Activated CD8-positive, alpha-beta memory T cell treated with anti-CD3 and anti-CD28 coated beads, Interleukin-2, amount 10 ng/mL, durations not matched to agents 7 days and 5 days (primary cell): ENCODE measurements at regions of chr9 and their contacts with region 1.

Region 1: DNA sequence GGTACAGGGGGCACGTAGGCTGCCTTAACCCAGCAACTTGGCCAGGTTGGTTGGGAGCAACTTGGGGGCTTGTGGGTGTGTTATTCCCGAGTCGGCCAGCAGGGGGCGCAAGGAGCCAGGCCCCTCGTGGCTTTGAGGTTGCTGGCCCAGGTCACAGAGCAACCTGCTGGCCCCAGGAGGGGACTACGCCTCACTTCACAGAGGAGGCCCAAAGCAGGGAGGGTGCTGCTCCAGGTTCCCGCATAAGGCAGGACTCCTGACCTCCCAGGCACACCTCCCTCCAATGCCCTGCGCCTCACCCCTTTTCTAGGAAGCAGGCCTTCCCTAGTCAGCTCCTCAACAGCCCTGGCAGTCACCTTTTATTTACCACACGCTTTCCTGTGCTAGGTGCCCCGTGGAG is 18.1 kb downstream of the KYAT1 start:
- DNase-seq: peak; percentile 89
- ATAC-seq: peak; percentile 93
- H3K4me3 Mint-ChIP-seq: no peak overlapping the region
- H3K27ac Mint-ChIP-seq: no peak overlapping the region
- H3K4me1 Mint-ChIP-seq: peaks cover 6% of the 10 kb centered on the region
- H3K27me3 Mint-ChIP-seq: no peaks in the 10 kb centered on the region

Region 2: DNA sequence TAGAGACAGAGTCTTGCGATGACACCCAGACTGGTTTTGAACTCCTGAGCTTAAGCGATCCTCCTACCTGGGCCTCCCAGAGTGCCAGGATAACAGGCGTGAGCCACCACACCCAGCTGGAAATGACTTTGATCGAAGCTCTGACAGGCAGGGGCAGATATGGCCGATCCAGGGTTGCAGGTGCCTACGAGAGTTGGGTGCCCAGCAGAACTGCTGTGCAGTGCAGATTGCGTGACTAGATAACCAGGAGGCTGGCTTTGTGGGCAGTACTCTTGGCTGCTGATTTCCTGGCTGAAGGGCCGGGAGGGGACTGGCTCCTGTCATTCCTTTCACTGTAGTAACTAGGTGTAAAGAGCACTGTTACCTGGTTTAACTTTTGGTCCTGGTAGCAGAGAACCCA is 64.8 kb before region 1 on chr9:
- CTCF ChIA-PET with region 1: no interaction called
- DNase-seq: no peak
- ATAC-seq: no peak
- H3K4me3 Mint-ChIP-seq: no peak overlapping the region
- H3K27ac Mint-ChIP-seq: no peak overlapping the region
- H3K4me1 Mint-ChIP-seq: peaks cover 1% of the 10 kb centered on the region
- H3K27me3 Mint-ChIP-seq: no peaks in the 10 kb centered on the region

Region 3: GRCh38 chr9:128881901-128882681 is 18.4 kb after region 1 on chr9 and contains the starts of genes KYAT1 and LRRC8A:
- CTCF ChIA-PET with region 1: interaction called, 17 read pairs
- DNase-seq: peak; percentile 99
- ATAC-seq: peak; percentile 96
- H3K4me3 Mint-ChIP-seq: peak within 1 kb of the TSS; percentile 90
- H3K27ac Mint-ChIP-seq: peak within 1 kb of the TSS; percentile 89
- H3K4me1 Mint-ChIP-seq: peaks cover 48% of the 10 kb centered on the region
- H3K27me3 Mint-ChIP-seq: no peaks in the 10 kb centered on the region
- total RNA-seq, gene KYAT1: 12.7 to 20.6 TPM
- total RNA-seq, gene LRRC8A: 25.6 to 26.7 TPM

Region 4: DNA sequence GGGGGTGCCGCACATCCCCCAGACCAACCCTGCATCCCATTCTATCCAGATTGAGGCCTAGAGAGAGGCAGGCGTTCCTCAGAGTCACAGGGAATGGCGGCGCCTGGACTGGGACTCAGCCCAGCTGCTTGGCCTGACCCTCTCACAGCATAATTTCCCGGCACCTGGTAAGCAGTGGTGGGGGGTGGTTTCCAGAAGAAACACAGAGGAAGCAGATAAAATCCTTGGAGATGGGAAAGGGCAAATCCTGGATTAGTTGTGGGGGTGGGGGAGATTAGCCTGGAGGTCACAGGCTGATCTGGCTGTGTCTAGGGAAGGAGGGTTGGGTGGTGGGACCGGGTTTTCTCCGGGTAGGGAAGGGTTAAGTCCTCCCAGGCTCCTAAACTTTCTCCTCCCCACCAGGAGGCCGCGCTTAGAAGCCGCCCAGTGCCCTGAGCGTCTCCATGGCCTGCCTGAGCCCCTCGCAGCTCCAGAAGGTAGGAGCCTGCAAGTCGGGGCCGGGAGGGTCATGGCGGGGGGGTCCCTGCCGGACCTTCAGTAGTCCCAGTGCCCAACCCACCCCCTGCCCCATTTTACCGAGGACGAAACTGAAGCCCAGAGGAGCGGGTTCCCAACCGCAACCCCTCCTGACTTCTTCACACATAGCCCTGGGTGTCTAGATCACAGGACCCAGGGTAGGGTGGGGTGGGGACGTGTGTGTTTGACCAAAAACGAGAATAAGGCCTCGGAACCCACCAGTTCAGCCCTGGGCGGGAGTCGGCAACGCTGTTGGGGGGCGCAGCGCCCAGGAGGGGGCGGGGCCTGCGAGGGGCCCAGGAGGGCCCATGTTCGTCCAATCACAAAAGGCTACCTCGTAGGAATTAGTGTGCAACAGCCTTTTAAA is 58.5 kb after region 1 on chr9:
- CTCF ChIA-PET with region 1: interaction called, 162 read pairs
- DNase-seq: no peak
- ATAC-seq: peak; percentile 35
- H3K4me3 Mint-ChIP-seq: no peak overlapping the region
- H3K27ac Mint-ChIP-seq: no peak overlapping the region
- H3K4me1 Mint-ChIP-seq: peaks cover 8% of the 10 kb centered on the region
- H3K27me3 Mint-ChIP-seq: no peaks in the 10 kb centered on the region

Region 5: DNA sequence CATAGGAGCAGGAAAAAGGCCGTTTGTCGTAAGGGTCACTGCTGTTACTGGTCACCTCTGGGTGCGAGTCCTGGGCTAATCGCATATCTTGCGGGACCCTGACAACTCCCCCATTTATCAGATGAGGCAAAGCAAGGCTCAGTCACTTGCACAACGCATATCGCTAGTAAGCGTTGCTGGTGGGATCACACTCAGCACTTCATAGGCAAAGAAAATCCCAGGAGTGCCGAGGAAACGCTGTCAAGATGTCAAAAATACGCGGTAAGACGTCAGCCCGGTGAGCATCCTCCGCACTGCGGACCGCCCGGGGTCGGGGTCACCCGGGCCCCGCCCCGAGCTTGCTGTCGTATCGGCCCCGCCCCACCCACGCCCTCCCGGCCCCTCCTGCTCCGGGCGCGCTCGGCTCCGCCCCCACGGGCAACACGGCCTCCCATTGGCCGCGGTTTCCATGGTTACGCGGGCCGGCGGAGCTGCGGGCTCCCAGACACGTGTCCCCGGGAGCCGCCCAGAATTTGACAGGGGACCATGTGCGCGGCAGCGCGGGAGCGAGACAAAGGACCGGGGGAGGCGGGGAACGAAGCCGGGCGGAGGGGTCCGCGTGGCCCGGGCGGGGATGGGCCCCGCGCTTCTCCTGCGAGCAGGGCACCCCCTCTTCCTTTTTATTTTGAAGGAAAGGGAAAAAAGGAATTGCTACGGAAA is 394.6 kb after region 1 on chr9:
- CTCF ChIA-PET with region 1: no interaction called
- DNase-seq: peak; percentile 93
- ATAC-seq: peak; percentile 96
- H3K4me3 Mint-ChIP-seq: peak overlapping the region; percentile 52
- H3K27ac Mint-ChIP-seq: no peak overlapping the region
- H3K4me1 Mint-ChIP-seq: peaks cover 26% of the 10 kb centered on the region
- H3K27me3 Mint-ChIP-seq: peaks cover 66% of the 10 kb centered on the region

Region 6: DNA sequence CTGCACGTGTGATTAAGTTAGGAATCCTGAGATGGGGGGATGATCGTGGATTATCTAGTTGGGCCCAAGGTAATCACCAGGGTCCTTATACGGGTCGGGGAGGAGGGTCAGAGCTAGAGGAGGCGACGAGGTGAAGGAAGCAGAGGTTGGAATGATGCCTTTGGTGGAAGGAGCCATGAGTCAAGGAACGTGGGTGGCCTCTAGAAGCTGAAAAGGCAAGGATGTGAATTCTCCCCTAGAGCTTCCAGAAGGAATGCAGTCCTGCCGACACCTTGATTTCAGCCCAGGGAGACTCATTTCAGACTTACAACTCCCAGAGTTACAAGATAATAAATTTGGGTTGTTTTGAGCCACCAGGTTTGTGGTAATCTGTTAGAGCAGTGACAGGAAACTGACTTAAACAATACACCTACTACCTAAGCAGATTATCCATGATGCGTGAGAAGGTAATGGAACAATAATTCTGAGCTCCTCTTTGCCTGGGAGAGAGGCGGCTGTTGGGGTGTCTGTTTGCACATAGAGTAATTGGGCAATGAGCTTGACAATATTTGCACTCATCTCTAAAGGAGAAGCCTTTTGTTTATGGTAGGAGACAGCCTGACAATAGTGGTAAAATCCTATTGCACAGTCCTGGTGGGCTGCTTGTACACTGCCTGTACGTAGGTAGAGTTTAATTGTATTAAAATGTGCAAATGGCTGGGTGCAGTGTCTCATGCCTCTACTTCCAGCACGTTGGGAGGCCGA is 443.8 kb after region 1 on chr9:
- CTCF ChIA-PET with region 1: no interaction called
- DNase-seq: peak; percentile 26
- ATAC-seq: peak; percentile 30
- H3K4me3 Mint-ChIP-seq: no peak overlapping the region
- H3K27ac Mint-ChIP-seq: no peak overlapping the region
- H3K4me1 Mint-ChIP-seq: no peaks in the 10 kb centered on the region
- H3K27me3 Mint-ChIP-seq: peaks cover 10% of the 10 kb centered on the region